Tibial artery (tissue), 4 donors: ENCODE measurements at regions of chr17 and their contacts with region 1.

Region 1: GRCh38 chr17:57697891-57698711 is 47.0 kb downstream of the CCDC182 start:
- DNase-seq: no peak
- H3K4me3 ChIP-seq: no peak overlapping the region
- H3K27ac ChIP-seq: no peak overlapping the region
- H3K4me1 ChIP-seq: no peaks in the 10 kb centered on the region
- H3K27me3 ChIP-seq: peaks cover 0 to 21% of the 10 kb centered on the region in 2 donors
- CTCF ChIP-seq: no peak

Region 2: GRCh38 chr17:57511430-57512123 is 186.5 kb before region 1 on chr17:
- intact Hi-C with region 1: loop called (anchors 2 kb)
- DNase-seq: no peak
- H3K4me3 ChIP-seq: no peak overlapping the region
- H3K27ac ChIP-seq: no peak overlapping the region
- H3K4me1 ChIP-seq: peaks cover 0 to 22% (median 12%) of the 10 kb centered on the region in 4 donors
- H3K27me3 ChIP-seq: no peaks in the 10 kb centered on the region
- CTCF ChIP-seq: no peak

Region 3: DNA sequence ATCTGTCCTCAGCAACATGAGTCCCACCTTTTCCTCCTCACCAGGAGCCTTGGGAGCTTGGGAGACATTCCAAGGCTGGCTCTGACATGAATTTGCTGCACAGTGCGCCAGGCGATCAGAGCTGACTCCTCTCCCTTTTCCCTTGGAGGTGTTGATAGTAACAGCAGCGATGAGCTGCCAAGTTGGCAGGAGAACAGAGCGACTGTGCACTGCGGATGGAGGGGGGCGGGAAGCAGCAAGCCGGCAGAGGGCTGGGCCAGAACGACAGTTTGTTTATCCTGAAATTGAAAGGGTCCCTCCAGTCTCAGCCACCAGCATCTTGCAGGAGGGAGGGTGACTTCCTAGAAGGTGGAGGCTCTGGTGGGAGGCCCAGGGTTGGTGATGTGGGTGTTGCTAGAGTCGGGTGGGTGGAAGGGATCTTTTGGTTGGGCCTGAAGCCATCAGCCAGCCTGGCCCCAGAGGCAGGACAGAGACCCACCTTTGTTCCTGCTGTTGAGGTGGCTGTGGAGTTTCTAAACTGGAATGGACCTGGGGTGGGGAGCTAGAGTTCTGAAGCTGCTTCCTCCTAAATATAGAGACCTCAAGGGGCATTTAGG is 362.6 kb after region 1 on chr17:
- intact Hi-C with region 1: no loop called
- DNase-seq: no peak
- H3K4me3 ChIP-seq: no peak overlapping the region
- H3K27ac ChIP-seq: no peak overlapping the region
- H3K4me1 ChIP-seq: no peaks in the 10 kb centered on the region
- H3K27me3 ChIP-seq: peaks cover 0 to 3% of the 10 kb centered on the region in 2 donors
- CTCF ChIP-seq: no peak